ENCODE measurements at regions of chr2 and their contacts with region 1.

Region 1: DNA sequence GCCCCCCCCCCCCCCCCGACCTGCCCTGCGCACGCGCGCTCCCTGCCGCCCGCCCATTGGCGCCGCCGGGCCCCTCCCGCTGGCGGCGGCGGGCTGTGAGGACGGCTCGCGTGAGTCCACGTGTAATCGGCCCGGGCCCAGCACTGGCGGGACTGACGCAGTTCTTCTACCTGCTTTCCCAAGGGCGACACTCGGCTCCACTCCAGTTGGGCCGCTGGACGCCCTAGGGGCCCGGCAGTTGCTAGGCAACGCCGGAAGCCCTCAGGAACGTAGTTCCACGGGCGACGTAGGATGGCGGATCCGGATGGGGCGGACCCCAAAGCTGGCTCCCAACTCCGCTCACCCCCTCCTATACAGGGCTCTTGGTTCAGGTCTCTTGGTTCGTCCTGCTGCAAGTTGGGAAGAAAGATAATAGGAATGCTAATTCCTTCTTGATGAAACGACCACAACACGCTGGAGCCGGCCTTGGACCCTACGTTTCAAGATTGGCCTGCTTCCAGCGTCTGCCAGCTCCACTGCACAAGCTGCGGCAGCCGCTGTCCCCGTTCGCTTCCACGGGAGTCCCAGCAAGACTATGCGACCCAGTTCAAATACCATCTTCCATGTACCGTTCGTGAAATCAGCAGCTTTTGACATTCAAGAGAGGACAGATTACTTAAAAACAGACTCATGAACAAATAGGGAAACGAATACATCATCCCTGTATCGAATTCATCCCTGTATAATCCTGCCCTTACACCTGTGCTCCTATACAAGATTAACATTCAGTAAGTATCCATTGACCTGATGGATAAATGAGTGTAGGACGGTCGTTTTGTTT is 415 bp upstream of the MCFD2 start:
- DNase-seq: peak; percentile 78 to 93 (median 86)
- H3K4me3 ChIP-seq: peak overlapping the region; percentile 63 to 100 (median 99)
- H3K27ac ChIP-seq: peak overlapping the region; percentile 66 to 98 (median 91)
- H3K27me3 ChIP-seq: no peaks in the 10 kb centered on the region
- CTCF ChIP-seq: peak in 7 of 56 donors; percentile 4 to 31 (median 10)

Region 2: DNA sequence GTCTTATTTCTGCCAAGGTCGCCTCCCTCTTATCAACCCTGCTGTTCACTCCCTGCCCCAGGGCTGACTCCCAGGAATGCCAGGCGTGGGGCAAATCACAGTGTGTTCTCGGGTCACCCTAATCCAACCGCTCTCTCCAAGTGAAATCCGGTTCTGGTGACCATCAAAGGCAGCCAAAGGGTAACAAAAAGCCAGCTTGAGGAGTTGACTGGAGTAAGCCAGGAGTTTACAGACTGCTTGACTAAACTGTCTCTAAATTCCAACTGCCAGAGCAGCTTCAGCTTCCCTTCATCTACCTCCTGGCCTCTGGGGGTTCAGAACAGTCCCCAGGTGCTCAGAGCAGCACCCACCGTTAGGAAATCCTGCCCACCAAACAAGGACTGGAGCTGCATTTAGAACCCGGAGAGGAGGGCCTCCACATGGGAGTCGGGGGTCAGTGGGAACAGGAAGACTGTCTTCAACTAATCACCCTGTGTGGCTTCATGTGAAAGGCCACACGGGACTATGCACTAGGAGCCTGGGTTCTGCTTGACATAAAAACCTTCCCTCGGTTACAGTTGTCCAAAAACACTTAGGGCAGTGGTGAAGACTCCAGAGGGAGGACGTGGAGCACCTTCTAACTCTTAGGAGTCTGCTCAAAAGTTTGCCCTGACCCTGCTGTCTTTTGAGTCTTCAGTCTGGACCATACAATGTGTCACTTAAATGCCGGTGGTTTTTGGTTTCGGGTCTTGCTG is 23.8 kb after region 1 on chr2:
- intact Hi-C with region 1: loop called in 1 of 2 experiments (anchors 2 kb)
- DNase-seq: no peak
- H3K4me3 ChIP-seq: peak overlapping the region in 45 of 59 donors; percentile 47 to 97 (median 88)
- H3K27ac ChIP-seq: peak overlapping the region in 57 of 59 donors; percentile 27 to 97 (median 89)
- H3K27me3 ChIP-seq: no peaks in the 10 kb centered on the region
- CTCF ChIP-seq: no peak

Region 3: DNA sequence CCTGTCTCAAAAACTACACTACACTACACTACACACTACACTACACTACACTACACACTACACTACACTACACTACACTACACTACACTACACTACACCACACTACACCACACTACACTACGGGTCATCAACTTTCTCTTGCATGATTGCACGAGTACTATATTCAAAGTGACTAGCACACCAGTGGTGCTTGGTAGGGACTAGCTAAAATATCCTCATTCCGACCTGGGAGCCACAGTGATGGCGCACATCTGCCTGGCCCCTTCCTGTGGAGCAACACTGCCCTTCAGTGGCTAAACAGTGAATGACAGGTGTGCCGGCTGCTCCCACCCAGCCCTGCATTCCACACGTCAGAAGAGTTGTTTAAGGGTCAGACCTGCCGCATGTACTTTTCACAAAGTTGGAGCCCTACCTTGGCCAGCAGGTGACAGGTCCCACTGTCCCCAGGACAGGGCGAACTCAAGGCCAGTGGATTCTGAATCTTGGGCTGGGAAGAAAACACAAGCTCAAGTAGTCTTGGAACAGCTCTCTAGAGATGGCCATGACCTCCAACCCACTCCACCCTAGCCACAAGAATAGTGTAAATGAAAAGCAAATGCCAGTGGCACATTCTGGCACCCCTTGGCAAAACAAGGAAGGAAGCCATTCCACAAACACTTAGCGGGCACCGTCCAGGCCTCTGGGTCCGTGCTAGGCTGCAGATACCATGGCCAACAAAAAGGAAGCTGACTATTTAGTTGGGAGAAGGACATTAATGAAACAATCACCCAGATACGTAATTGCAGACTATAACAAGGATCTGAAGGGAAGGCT is 407.2 kb after region 1 on chr2:
- intact Hi-C with region 1: loop called (anchors 2 to 5 kb)
- DNase-seq: peak; percentile 58 to 87 (median 78)
- H3K4me3 ChIP-seq: no peak overlapping the region
- H3K27ac ChIP-seq: peak overlapping the region in 52 of 59 donors; percentile 3 to 100 (median 90)
- H3K27me3 ChIP-seq: no peaks in the 10 kb centered on the region
- CTCF ChIP-seq: peak; percentile 72 to 99 (median 97)